HCT116 (cell line): ENCODE measurements at regions of chr1 and their contacts with region 1.

Region 1: DNA sequence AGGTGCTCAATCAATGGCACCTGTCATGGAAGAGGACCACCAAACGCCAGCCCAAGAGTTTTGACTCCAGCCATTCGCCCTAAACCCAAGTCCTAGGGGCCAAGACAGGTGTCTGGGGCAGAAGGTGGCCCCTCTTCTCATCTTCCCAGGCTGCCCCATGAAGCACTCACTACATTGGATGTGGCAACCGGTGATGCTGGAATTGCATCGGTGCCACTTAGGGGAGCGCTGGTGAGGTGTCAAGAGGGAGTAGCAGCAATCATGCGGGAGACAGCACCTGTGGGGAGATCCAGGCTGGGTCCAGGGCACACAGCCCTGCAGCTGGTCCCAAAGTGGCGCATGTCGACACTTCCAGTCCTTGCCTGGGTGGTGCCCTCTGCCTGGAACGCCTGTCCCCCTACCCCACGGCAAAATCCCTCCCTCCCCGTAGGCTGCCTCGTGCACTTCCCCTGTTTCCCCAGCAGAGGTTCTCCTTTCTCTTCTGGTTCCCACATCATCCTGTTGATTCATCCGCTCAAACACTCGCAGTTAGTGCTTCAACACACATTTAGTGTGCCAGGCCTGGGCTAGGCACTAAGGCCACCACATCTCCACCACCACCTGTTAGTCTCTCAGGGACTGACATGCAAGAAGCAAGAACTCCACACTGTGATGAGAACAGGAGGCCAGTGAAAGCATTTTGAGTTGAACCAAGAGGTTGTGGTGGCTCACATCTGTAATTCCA is 18.5 kb downstream of the PLA2G2D start:
- DNase-seq: peak; percentile 52
- ATAC-seq: peak; percentile 96
- H3K4me3 ChIP-seq: no peak overlapping the region
- H3K27ac ChIP-seq: no peak overlapping the region
- H3K4me1 ChIP-seq: peaks cover 0 to 1% of the 10 kb centered on the region in 2 experiments; a peak in 1 of 4 replicates
- H3K27me3 ChIP-seq: no peaks in the 10 kb centered on the region
- CTCF ChIP-seq: peak; percentile 81 to 88 (median 87)
- POLR2A ChIP-seq: no peak
- RAD21 ChIP-seq: peak; percentile 98

Region 2: GRCh38 chr1:19840228-19840627 is 260.6 kb before region 1 on chr1:
- CTCF ChIA-PET with region 1: no interaction called
- POLR2A ChIA-PET with region 1: no interaction called
- RAD21 ChIA-PET with region 1: no interaction called
- intact Hi-C with region 1: no loop called
- DNase-seq: no peak
- ATAC-seq: no peak
- H3K4me3 ChIP-seq: no peak overlapping the region
- H3K27ac ChIP-seq: no peak overlapping the region
- H3K4me1 ChIP-seq: peaks cover 0 to 3% of the 10 kb centered on the region in 2 experiments; a peak in 1 of 4 replicates
- H3K27me3 ChIP-seq: no peaks in the 10 kb centered on the region
- CTCF ChIP-seq: no peak
- POLR2A ChIP-seq: no peak
- RAD21 ChIP-seq: no peak

Region 3: DNA sequence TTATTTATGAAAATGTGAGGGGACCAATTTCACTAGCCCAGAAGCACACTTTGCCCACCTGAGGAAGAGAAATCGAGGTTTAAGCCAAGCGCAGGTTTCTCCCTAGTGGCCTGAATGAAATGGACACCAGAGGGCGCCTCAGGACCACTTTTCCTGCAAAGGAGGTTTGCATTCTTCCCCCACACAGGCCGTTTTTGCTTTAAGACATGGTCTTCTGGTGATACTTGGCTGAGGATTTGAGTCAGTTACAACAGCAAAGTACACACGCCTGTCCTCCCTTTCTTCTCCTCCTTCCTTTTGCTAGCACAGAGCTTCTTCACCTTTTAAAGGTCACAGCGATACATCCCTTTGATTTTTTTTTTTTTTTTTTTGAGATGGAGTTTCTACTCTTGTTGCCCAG is 182.7 kb before region 1 on chr1:
- CTCF ChIA-PET with region 1: no interaction called
- POLR2A ChIA-PET with region 1: no interaction called
- RAD21 ChIA-PET with region 1: no interaction called
- intact Hi-C with region 1: loop called (anchors 2 kb)
- DNase-seq: peak; percentile 75
- ATAC-seq: peak; percentile 80
- H3K4me3 ChIP-seq: no peak overlapping the region
- H3K27ac ChIP-seq: no peak overlapping the region
- H3K4me1 ChIP-seq: peaks cover 0 to 13% of the 10 kb centered on the region in 2 experiments; a peak in 2 of 4 replicates
- H3K27me3 ChIP-seq: no peaks in the 10 kb centered on the region
- CTCF ChIP-seq: peak; percentile 91 to 93 (median 92)
- POLR2A ChIP-seq: no peak
- RAD21 ChIP-seq: peak; percentile 99

Region 4: DNA sequence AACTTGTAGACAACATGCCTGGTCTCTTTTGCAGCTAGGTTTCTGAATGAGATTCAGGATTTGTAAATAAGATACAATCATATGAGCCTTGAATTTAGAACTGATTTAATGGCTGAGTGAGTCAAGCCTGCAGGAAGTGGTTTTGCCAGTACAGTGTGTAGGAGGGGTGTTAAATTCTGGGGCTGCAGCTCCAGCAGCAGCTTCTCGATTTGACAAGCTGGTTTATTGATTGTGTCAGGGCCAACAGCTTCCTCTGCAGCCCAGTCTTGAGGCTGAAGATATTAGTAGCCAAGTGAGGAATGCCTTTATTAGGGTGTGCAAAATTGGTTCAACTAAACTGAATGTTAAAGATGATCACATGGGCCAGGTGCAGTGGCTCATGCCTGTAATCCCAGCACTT is 42.3 kb before region 1 on chr1:
- CTCF ChIA-PET with region 1: no interaction called
- POLR2A ChIA-PET with region 1: no interaction called
- RAD21 ChIA-PET with region 1: no interaction called
- intact Hi-C with region 1: no loop called
- DNase-seq: no peak
- ATAC-seq: no peak
- H3K4me3 ChIP-seq: no peak overlapping the region
- H3K27ac ChIP-seq: no peak overlapping the region
- H3K4me1 ChIP-seq: peaks cover 0 to 8% of the 10 kb centered on the region in 2 experiments; a peak in 2 of 4 replicates
- H3K27me3 ChIP-seq: no peaks in the 10 kb centered on the region
- CTCF ChIP-seq: no peak
- POLR2A ChIP-seq: no peak
- RAD21 ChIP-seq: no peak